HAP-1 (cell line): ENCODE measurements at regions of chr11 and their contacts with region 1.

Region 1: DNA sequence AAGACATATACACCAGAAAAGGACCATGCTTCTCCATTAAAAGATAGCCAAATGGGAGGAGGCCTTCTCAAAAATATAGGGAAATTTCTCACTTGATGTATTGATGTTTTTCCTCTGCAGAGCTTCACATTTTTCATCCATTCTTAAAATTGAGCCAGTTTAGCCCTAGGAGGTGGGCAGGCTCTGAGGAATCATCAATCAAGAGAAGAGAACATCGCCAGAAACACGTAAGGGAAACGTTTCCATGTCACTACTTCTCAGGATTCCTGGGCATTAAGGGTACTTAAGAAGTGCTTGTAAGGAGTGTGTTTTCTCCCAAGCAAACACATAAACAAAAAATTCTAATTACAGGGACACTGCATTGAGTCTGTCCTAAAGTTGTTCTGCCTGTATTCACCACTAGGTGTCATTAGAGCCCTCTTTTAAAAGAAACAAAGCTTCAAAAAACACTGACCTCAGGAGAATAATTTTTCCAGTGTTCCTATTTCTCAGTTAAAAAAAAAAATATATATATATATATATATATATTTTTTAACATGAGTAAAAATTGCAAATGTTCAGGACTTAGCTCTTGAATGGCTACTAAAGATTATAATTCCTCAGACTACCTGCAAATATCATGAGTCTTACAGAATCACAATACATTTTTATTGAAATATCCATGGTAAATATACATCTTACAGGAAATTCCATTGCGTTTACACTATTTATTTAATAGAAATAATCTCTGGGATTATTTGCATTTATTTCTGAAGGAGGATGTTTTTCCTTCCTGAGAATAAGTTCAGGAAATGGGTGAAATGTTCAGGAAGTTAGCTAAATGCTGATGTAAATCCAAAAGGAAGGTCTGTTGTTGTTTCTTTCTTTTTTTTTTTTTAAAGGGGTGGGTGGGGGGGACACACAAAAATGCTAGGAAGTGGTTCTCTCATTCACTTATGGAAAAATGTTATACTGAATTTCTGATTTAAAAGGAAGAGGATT is 16.0 kb downstream of the FZD4 start:
- DNase-seq: peak; percentile 17 to 66
- H3K4me3 ChIP-seq: no peak overlapping the region
- H3K4me1 ChIP-seq: peaks cover 16% of the 10 kb centered on the region
- H3K27me3 ChIP-seq: no peaks in the 10 kb centered on the region

Region 2: GRCh38 chr11:87114093-87114492 is 174.9 kb after region 1 on chr11:
- in situ Hi-C with region 1: no loop called
- DNase-seq: no peak
- H3K4me3 ChIP-seq: no peak overlapping the region
- H3K4me1 ChIP-seq: no peaks in the 10 kb centered on the region
- H3K27me3 ChIP-seq: no peaks in the 10 kb centered on the region

Region 3: GRCh38 chr11:87290304-87290922 is 351.2 kb after region 1 on chr11:
- in situ Hi-C with region 1: loop called (anchors 5 kb)
- DNase-seq: peak in 1 of 2 experiments; percentile 67
- H3K4me3 ChIP-seq: no peak overlapping the region
- H3K4me1 ChIP-seq: peaks cover 42% of the 10 kb centered on the region
- H3K27me3 ChIP-seq: no peaks in the 10 kb centered on the region